Activated CD4-positive, alpha-beta memory T cell treated with anti-CD3 and anti-CD28 coated beads, Interleukin-2, amount 10 ng/mL, durations not matched to agents 7 days and 5 days (primary cell): ENCODE measurements at regions of chr14 and their contacts with region 1.

Region 1: DNA sequence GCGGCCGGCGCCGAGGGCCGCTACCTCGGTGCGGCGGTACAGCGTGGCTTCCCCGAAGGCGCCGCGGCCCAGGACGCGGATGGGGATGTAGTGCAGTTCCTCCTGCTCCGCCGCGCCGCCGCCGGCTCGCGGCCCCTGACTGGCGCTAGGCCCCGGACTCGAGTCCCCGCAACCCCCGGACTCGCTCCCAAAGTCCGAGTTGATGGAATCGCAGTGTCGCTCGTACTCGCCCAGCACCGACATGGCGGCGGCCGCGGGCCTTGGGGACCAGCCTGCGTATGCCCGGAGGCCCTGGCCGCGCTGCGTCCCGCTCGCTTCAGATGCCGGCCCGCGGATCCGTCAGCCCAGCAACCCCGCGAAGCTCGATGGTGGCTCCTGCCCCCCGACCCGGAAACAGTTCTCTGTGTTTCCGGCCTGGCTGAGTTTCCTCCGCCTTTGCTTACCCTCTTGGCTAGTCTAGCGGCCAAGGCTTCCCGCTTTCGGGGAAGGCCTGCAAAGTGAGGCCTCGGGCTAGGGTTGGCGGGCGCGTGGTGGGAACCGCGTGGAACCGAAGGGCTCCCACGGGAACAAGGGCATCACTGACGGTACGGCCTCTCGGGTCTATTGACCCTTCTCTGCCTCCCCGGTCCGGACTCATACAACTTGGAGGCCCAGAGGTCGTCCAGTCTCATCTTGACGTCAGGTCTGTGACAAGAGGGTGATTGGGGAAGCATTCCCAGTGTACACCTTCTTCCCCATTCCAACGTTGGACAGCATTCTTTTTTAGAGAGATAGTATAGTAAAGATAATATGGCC is at the start of gene NEK9:
- DNase-seq: peak; percentile 91
- H3K4me3 Mint-ChIP-seq: peak within 1 kb of the TSS; percentile 82
- H3K27ac Mint-ChIP-seq: peak within 1 kb of the TSS; percentile 86
- H3K4me1 Mint-ChIP-seq: peaks cover 39% of the 10 kb centered on the region
- H3K27me3 Mint-ChIP-seq: no peaks in the 10 kb centered on the region
- total RNA-seq, gene NEK9: 72.0 to 77.3 TPM

Region 2: DNA sequence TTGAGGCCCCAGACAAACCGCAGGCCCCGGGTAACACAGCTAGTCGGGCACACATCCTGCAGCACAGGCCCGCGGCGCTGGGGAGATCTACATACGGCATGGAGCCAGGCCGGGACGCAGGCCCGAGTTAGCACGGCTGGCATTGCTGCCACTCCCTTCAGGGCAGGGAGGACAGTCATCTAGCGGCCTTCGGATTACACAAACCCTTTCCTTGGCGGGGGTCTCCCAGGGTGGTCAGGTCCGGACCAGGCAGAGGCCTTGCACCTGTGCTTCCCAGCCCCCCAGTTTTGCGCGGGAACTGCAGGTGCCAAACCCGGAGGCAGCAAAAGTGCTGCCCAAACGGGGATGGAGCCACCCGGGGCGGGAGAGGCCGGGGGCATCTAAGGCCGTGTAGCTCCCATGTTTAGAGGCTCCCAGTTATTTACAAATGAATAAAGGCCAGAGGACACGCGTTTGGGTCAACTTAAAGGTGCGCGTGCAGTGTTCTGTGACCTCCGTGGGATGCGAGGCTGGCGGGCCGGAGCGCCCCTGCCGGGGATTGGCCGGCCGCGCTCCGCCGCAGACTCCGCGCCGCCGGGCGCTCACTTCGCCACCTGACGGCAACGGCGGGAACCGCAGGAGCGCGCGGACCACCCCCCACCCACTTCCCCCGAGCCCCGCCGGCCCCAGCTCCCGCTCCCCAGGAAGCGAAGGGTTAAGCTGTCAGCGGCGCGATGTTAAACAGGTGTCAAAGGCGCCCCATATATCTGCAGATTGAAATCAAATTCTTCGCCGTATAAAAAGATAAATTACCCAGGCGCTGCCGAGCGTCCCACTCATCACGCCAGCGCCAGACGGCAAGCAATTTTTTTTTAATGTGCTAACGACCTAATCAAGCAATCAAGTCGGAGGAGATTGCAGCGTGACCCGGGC is 869.5 kb before region 1 on chr14:
- CTCF ChIA-PET with region 1: no interaction called
- POLR2A ChIA-PET with region 1: no interaction called
- DNase-seq: peak; percentile 64
- H3K4me3 Mint-ChIP-seq: peak overlapping the region; percentile 71
- H3K27ac Mint-ChIP-seq: no peak overlapping the region
- H3K4me1 Mint-ChIP-seq: peaks cover 8% of the 10 kb centered on the region
- H3K27me3 Mint-ChIP-seq: peaks cover 19% of the 10 kb centered on the region

Region 3: DNA sequence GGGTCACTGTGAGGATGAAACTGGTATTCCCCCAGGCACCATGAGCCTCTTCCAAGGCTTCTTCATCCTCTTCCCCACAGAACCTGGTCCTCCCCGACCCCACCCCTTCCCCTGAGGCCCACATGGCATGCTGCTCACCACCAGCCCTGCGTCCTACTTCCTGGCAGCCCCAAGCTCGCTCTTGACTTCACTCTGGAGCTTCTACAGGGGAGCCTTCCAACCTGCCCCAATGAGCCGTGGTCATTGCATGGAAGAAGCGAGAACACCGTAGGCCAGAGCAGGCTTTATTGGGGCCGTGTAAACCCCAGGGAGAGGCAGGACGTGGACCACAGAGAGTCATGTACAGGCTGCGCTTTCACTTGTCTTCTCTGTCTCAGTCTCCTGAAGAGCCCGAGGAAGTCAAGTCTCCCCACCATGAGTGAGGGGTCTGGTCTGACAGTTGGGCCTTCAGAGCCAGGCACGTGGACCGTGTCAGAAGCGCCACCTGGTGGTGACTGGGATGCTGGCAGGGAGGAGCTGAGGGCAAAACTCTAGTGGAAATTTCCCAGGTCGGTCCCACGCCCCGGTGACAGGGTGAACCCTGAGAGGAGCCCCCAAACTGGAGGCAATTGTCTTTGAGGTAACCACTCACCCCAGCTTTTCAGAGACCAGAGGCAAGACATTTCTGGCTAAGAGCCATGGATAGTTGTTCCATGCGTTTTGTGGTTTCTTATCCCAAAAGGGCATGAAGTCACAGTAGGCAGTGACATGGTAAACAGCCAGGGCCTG is 221.3 kb before region 1 on chr14:
- CTCF ChIA-PET with region 1: no interaction called
- POLR2A ChIA-PET with region 1: no interaction called
- DNase-seq: peak; percentile 76
- H3K4me3 Mint-ChIP-seq: no peak overlapping the region
- H3K27ac Mint-ChIP-seq: no peak overlapping the region
- H3K4me1 Mint-ChIP-seq: peaks cover 3% of the 10 kb centered on the region
- H3K27me3 Mint-ChIP-seq: no peaks in the 10 kb centered on the region

Region 4: GRCh38 chr14:75063407-75064213 is 63.3 kb before region 1 on chr14 and contains the start of gene ACYP1:
- CTCF ChIA-PET with region 1: no interaction called
- POLR2A ChIA-PET with region 1: interaction called, 18 read pairs
- DNase-seq: peak; percentile 93
- H3K4me3 Mint-ChIP-seq: peak within 1 kb of the TSS; percentile 99
- H3K27ac Mint-ChIP-seq: peak within 1 kb of the TSS; percentile 92
- H3K4me1 Mint-ChIP-seq: peaks cover 42% of the 10 kb centered on the region
- H3K27me3 Mint-ChIP-seq: no peaks in the 10 kb centered on the region
- total RNA-seq, gene ACYP1: 52.7 to 53.8 TPM

Region 5: GRCh38 chr14:75069045-75069810 is 57.6 kb before region 1 on chr14 and contains the start of gene ZC2HC1C:
- CTCF ChIA-PET with region 1: no interaction called
- POLR2A ChIA-PET with region 1: interaction called, 18 read pairs
- DNase-seq: peak; percentile 73
- H3K4me3 Mint-ChIP-seq: peak within 1 kb of the TSS; percentile 22
- H3K27ac Mint-ChIP-seq: no peak within 1 kb of the TSS
- H3K4me1 Mint-ChIP-seq: peaks cover 17% of the 10 kb centered on the region
- H3K27me3 Mint-ChIP-seq: no peaks in the 10 kb centered on the region
- total RNA-seq, gene ZC2HC1C: 2.0 to 2.4 TPM

Region 6: GRCh38 chr14:75094896-75095295 is 32.0 kb before region 1 on chr14:
- CTCF ChIA-PET with region 1: no interaction called
- POLR2A ChIA-PET with region 1: no interaction called
- DNase-seq: no peak
- H3K4me3 Mint-ChIP-seq: no peak overlapping the region
- H3K27ac Mint-ChIP-seq: no peak overlapping the region
- H3K4me1 Mint-ChIP-seq: no peaks in the 10 kb centered on the region
- H3K27me3 Mint-ChIP-seq: no peaks in the 10 kb centered on the region

Region 7: GRCh38 chr14:75141967-75142366 is 15.1 kb after region 1 on chr14:
- CTCF ChIA-PET with region 1: interaction called, 9 read pairs
- POLR2A ChIA-PET with region 1: interaction called, 11 read pairs
- DNase-seq: peak; percentile 31
- H3K4me3 Mint-ChIP-seq: no peak overlapping the region
- H3K27ac Mint-ChIP-seq: no peak overlapping the region
- H3K4me1 Mint-ChIP-seq: peaks cover 58% of the 10 kb centered on the region
- H3K27me3 Mint-ChIP-seq: no peaks in the 10 kb centered on the region

Region 8: DNA sequence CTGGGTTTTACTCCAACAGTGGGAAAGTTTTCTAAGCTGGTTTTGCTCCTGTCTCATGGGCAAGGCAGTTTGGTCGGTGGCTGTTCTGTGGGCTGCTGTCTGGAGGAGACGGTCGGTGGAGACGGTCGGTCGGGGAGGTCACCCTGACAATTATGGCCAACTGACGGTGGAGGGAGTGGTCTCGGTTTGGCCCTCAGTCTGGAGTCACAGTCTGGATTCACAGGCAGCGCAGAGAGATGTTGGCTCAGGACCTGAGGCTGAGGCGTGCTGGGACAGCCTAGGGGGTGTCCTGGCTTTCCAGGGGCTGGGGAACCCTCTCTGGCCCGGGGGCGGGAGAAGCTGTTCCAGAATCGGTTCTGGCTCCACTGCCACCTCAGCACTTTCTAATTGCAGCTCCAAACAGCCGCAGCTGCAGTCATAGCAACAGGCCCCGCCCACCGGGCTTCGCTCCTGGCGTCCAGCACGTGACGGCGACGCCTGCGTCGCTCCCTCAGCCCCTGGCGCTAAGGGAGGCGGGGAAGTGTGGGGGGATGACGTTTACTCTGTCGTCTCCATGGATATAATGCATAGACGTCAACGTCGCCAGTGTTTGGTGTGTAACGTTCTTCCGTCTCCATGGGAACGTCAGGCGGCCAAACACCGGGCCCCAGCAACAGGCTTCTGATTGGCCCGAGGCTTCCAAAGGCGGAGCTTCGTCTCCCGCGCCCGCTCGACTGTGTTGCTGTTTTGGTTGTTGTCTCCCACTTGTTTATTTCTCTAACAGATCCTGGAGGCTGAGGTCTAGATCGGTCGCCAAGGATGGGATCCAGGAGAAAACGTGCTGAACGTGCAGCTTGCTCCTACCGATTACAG is 132.0 kb after region 1 on chr14:
- CTCF ChIA-PET with region 1: interaction called, 6 read pairs
- POLR2A ChIA-PET with region 1: interaction called, 17 read pairs
- DNase-seq: peak; percentile 99
- H3K4me3 Mint-ChIP-seq: peak overlapping the region; percentile 76
- H3K27ac Mint-ChIP-seq: peak overlapping the region; percentile 68
- H3K4me1 Mint-ChIP-seq: peaks cover 23% of the 10 kb centered on the region
- H3K27me3 Mint-ChIP-seq: peaks cover 42% of the 10 kb centered on the region